Transverse colon (tissue), 4 donors: ENCODE measurements at regions of chr1 and their contacts with region 1.

Region 1: DNA sequence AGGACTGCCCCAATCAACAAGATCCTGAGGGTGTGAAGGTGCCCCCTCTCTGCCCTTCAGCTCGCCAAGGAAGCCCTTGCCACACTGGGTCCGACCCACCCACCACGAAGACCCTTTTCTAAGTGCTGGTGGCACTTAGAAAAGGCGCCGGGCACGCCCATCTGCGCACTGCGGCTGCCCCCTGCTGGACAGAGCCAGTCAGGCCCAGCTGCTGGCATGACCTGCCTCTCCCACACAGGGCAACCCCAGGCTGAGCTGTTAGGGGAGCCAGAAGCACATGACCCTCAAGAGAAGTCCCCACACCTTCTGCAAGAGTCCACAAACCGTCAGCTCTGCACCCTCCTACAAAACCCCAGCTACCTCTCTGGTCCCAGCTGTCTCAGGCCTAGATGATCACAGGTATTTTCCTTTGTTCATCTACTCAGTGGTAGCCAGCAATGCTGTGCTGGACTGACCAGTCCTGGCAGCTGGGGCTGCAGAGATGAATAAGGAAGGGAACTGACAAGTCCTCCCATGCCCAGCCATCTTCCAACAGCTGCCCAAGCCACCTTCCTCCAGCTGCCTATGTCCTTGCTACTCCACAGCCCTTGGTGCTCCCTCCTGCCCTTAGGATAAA is 40.0 kb upstream of the ZC3H12A start:
- DNase-seq: peak; percentile 66
- H3K4me3 ChIP-seq: no peak overlapping the region
- H3K27ac ChIP-seq: no peak overlapping the region
- H3K4me1 ChIP-seq: no peaks in the 10 kb centered on the region
- H3K27me3 ChIP-seq: peaks cover 44% of the 10 kb centered on the region
- CTCF ChIP-seq: peak; percentile 79 to 93 (median 86)
- EP300 ChIP-seq: no peak
- POLR2A ChIP-seq: no peak

Region 2: DNA sequence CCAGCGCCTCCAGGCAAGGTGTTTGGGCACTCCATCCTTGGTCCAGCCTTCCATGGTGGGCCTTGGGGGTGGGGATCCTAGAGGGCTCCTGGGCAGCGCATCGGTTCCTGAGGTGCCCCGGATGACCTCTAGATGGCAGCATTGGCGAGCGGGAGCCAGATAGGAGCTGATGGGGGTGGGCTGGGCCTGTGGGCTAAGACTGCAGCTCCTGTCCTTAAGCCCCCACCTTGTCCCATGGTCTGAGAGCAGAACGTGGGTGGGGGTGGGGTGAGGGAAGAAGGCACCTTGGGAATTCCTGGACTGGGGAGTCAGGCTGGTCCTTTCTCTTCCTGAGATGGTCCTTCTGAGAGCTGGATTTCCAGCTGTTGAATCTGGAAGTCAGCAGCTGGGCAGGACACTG is 858.3 kb before region 1 on chr1:
- in situ Hi-C with region 1: loop called in 2 of 4 experiments (anchors 10 to 25 kb)
- intact Hi-C with region 1: loop called (anchors 10 kb)
- DNase-seq: peak; percentile 38
- H3K4me3 ChIP-seq: no peak overlapping the region
- H3K27ac ChIP-seq: no peak overlapping the region
- H3K4me1 ChIP-seq: no peaks in the 10 kb centered on the region
- H3K27me3 ChIP-seq: peaks cover 30% of the 10 kb centered on the region
- CTCF ChIP-seq: peak; percentile 48 to 78 (median 68)
- EP300 ChIP-seq: no peak
- POLR2A ChIP-seq: no peak

Region 3: GRCh38 chr1:36585569-36586548 is 848.5 kb before region 1 on chr1:
- in situ Hi-C with region 1: loop called in 2 of 4 experiments (anchors 10 to 25 kb)
- intact Hi-C with region 1: no loop called
- DNase-seq: no peak
- H3K4me3 ChIP-seq: no peak overlapping the region
- H3K27ac ChIP-seq: no peak overlapping the region
- H3K4me1 ChIP-seq: no peaks in the 10 kb centered on the region
- H3K27me3 ChIP-seq: peaks cover 76% of the 10 kb centered on the region
- CTCF ChIP-seq: no peak
- EP300 ChIP-seq: no peak
- POLR2A ChIP-seq: no peak

Region 4: DNA sequence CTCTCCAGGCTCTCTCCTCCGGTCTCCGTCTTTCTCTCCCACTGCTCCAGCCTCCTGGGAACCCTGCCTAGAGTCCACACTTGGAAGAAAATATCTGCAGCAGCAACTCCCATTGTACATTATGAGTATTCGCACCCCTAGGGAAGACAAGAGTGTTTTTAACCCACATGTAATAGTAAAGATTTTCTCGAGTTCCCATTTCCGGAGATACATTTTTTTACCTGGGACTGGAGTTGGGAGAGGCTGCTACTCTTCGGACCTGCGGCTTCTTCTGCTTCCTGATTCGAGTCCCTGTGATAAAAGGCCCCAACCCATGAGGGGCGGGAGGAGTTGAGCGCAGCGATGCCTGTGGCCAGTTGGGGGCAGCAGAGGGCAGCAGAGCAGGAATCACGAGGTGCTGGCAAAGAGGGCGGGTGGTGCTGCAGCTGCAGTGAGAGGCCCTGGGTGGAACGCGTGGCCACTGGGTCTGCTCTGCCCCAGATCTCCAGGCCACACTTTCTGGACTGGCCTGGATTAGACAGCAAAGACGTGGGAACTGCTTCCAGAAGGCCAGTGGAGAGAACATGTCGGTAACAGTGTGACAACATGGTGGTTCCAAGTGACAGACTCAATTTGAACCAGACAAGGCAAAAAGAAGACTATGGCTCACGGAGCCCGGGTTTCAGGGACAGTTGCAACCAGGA is 730.7 kb before region 1 on chr1:
- in situ Hi-C with region 1: loop called in 3 of 4 experiments (anchors 10 to 25 kb)
- intact Hi-C with region 1: loop called (anchors 10 kb)
- DNase-seq: peak; percentile 72
- H3K4me3 ChIP-seq: no peak overlapping the region
- H3K27ac ChIP-seq: no peak overlapping the region
- H3K4me1 ChIP-seq: no peaks in the 10 kb centered on the region
- H3K27me3 ChIP-seq: peaks cover 21% of the 10 kb centered on the region
- CTCF ChIP-seq: peak; percentile 70 to 83 (median 75)
- EP300 ChIP-seq: no peak
- POLR2A ChIP-seq: no peak

Region 5: DNA sequence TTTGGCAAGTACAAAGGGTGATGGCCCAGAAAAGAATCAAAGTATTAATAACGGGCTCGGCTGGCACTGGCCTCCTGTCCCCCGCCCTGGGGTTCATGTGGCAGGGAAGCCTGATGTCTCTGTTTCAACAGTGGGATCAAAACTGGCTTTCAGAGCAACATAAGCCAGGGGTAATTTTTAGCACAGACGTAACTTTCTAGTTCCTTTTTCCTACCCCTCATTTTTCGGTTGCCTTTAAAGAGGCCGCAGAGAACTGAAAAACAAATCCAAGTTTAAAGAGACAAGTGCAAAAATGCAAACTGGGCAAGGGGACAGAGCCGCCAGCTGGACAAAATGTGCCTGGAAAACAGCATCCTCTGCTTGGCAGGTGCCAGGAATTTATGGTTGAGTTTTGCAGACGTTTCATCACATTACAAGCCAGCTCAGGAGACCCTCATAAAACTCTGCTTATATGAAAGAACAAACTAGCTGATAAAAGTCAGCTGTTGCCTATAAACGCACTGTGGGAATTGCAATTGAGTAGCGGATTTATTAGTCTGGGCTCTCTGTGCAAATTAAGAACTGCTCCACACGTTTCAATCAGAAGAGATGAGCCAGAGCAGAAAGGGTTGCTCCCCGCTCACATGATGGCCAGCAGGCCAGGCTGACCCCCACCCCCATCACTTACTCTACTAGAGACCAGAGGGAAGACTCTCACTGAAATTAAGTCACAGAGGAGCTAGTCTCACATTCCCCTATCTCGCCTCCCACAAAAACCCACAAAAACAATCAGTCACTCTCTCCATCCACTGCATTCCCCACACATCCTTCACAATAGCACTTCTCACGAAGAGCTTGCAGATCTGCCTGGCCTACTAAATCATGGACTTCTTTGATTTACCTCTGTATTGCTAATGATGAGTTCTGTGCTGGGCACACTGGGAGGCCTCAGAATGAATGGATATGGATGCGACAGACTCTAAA is 242.2 kb after region 1 on chr1:
- in situ Hi-C with region 1: loop called in 1 of 4 experiments (anchors 25 kb)
- intact Hi-C with region 1: no loop called
- DNase-seq: peak; percentile 30
- H3K4me3 ChIP-seq: no peak overlapping the region
- H3K27ac ChIP-seq: peak overlapping the region; percentile 58 to 80 (median 60)
- H3K4me1 ChIP-seq: peaks cover 0 to 19% (median 5%) of the 10 kb centered on the region in 4 donors
- H3K27me3 ChIP-seq: peaks cover 8% of the 10 kb centered on the region
- CTCF ChIP-seq: no peak
- EP300 ChIP-seq: no peak
- POLR2A ChIP-seq: no peak

Region 6: DNA sequence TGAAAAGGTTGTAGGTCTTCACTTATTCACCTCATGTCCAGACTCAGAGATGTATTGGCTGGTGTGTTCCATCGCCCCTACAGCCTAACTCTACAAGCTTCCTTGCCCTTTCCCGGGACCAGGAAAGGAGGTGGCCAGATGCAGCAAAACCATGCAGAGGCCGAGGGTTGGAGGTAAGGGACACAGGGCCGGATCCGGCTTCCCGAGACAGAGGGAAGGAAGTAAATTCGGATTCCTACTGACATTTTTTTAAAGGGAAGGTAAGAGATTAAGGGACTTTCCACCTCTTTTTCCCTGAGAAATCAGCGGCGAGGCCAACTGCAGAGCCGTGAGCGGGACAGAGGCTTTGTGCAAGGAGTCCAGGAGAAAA is 317.8 kb after region 1 on chr1:
- in situ Hi-C with region 1: no loop called
- intact Hi-C with region 1: no loop called
- DNase-seq: no peak
- H3K4me3 ChIP-seq: peak overlapping the region; percentile 16 to 58 (median 52)
- H3K27ac ChIP-seq: peak overlapping the region in 3 of 4 donors; percentile 34 to 62 (median 41)
- H3K4me1 ChIP-seq: peaks cover 0 to 21% (median 8%) of the 10 kb centered on the region in 4 donors
- H3K27me3 ChIP-seq: peaks cover 86% of the 10 kb centered on the region
- CTCF ChIP-seq: no peak
- EP300 ChIP-seq: no peak
- POLR2A ChIP-seq: no peak